HepG2 (cell line): ENCODE measurements at regions of chr20 and their contacts with region 1.

Region 1: DNA sequence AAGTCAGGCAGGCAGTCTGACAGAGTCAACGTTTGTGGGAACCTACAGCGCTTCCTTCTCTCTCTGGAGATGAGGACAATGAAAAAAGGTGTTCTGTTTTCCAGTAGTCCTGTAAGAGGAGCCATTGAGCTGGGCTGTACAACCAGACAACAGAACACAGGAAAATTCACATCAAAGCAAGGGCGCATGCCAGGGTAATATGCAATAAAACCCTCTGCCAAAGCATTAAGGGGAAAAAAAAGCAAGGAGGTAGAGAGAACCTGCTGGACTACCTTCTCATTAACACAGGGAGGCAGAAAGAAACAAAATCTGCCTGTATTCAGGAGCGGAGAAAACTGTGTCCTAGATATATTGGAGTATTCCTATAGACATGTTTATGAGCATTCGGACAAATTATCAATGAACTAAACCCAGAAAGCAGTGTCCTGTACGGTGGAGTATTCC is 1.3 kb downstream of the RNF24 start:
- DNase-seq: peak; percentile 87
- ATAC-seq: peak; percentile 74
- H3K4me3 ChIP-seq: peak overlapping the region; percentile 92 to 97 (median 95)
- H3K27ac ChIP-seq: no peak overlapping the region
- H3K4me1 ChIP-seq: peaks cover 42% of the 10 kb centered on the region
- H3K27me3 ChIP-seq: no peaks in the 10 kb centered on the region; a peak in 1 of 5 replicates
- CTCF ChIP-seq: peak; percentile 93
- EP300 ChIP-seq: no peak
- POLR2A ChIP-seq: no peak
- RAD21 ChIP-seq: peak; percentile 83

Region 2: DNA sequence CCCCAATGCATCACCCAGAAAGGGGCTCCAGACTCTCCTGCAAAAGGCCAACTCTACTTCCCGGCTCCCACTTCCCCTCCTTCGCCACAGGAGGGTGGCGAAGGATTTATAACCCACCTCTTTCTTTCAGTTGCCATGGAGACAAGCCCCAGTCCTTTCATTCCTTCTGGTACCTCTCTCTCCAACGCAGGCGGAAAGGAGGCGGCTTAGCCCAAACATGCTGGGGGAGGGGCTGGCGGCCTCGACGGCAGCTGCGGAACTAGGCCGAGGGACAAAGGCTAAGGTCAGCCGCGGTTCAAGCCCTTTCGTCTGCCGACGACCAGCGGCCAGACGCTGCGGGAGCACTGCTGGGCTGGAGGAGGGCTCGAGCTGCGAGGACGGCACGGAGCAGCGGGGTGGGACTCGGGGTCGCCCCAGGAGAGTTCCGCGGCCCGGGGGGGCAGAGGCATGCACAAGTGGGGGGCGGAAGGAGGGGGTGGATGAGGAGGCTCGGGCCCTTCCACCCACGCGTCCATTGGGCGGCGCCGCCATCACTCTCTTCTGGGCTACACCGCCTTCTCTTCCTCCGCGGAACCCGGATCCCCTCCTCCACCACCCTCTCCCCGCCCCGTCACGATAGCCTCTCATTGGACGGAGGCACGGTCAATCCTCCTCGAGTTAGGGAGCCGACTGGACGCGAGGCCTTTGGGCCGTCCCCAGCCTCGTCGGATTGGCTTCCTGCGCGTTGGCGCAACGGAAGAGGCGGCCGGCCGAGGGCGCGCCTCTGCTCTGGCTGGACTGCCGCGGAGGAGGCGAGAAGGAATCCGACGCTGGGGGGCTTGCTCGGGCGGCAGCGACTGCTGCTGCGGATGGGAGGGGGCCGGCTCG is 125.2 kb before region 1 on chr20 and contains the start of gene PANK2:
- CTCF ChIA-PET with region 1: no interaction called
- POLR2A ChIA-PET with region 1: interaction called, 6 read pairs
- in situ Hi-C with region 1: no loop called
- intact Hi-C with region 1: loop called (anchors 5 kb)
- DNase-seq: peak; percentile 99
- ATAC-seq: peak; percentile 97
- H3K4me3 ChIP-seq: peak within 1 kb of the TSS; percentile 86 to 94 (median 94)
- H3K27ac ChIP-seq: peak within 1 kb of the TSS; percentile 86
- H3K4me1 ChIP-seq: peaks cover 46% of the 10 kb centered on the region
- H3K27me3 ChIP-seq: no peaks in the 10 kb centered on the region; a peak in 1 of 5 replicates
- CTCF ChIP-seq: peak; percentile 65
- EP300 ChIP-seq: peak in 1 of 2 experiments; percentile 42; a peak in 1 of 4 replicates
- POLR2A ChIP-seq: peak; percentile 88 to 89
- RAD21 ChIP-seq: peak; percentile 78
- total RNA-seq, gene PANK2: 123 and 127 TPM in 2 replicates

Region 3: DNA sequence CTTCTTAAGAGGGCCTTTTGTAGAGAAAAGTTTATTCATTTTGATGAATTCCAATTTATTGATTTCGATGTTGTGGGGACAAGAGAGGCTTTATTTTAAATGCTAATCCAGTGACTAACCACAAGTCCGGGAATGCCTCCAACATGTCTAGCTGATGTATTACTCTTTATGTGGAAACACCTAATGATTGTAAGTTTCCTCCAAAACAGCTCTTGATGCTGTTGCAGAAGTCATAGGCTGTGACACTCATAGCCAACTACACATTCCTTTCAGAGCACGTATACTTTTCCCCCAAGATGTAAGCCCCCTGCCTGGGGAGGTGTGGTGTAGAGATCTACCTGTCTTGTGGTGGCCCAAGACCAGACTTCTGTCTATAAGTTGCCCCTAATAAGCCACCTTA is 62.6 kb after region 1 on chr20:
- CTCF ChIA-PET with region 1: interaction called, 6 read pairs
- POLR2A ChIA-PET with region 1: no interaction called
- in situ Hi-C with region 1: loop called (anchors 5 kb)
- intact Hi-C with region 1: loop called (anchors 1 kb)
- DNase-seq: no peak
- ATAC-seq: no peak
- H3K4me3 ChIP-seq: no peak overlapping the region
- H3K27ac ChIP-seq: no peak overlapping the region
- H3K4me1 ChIP-seq: no peaks in the 10 kb centered on the region
- H3K27me3 ChIP-seq: peaks cover 0 to 13% of the 10 kb centered on the region in 2 experiments; a peak in 1 of 5 replicates
- CTCF ChIP-seq: no peak
- EP300 ChIP-seq: no peak
- POLR2A ChIP-seq: no peak
- RAD21 ChIP-seq: no peak

Region 4: GRCh38 chr20:4082406-4083097 is 68.5 kb after region 1 on chr20:
- CTCF ChIA-PET with region 1: interaction called, 59 read pairs
- POLR2A ChIA-PET with region 1: interaction called, 4 read pairs
- in situ Hi-C with region 1: loop called (anchors 5 kb)
- intact Hi-C with region 1: loop called (anchors 1 kb)
- DNase-seq: peak; percentile 89
- ATAC-seq: peak; percentile 70
- H3K4me3 ChIP-seq: peak overlapping the region; percentile 4 to 63 (median 34); a peak in 4 of 6 replicates
- H3K27ac ChIP-seq: no peak overlapping the region
- H3K4me1 ChIP-seq: peaks cover 39% of the 10 kb centered on the region
- H3K27me3 ChIP-seq: peaks cover 0 to 8% of the 10 kb centered on the region in 2 experiments; a peak in 2 of 5 replicates
- CTCF ChIP-seq: peak; percentile 19; the same call in 1 of the 2 replicates
- EP300 ChIP-seq: no peak
- POLR2A ChIP-seq: no peak
- RAD21 ChIP-seq: no peak